Activated CD4-positive, alpha-beta memory T cell treated with anti-CD3 and anti-CD28 coated beads, Interleukin-2, amount 10 ng/mL, durations not matched to agents 7 days and 5 days (primary cell): ENCODE measurements at regions of chr1 and their contacts with region 1.

Region 1: GRCh38 chr1:206663832-206664652 is 20.7 kb upstream of the MAPKAPK2 start:
- DNase-seq: peak; percentile 69
- H3K4me3 Mint-ChIP-seq: no peak overlapping the region
- H3K27ac Mint-ChIP-seq: no peak overlapping the region
- H3K4me1 Mint-ChIP-seq: peaks cover 29% of the 10 kb centered on the region
- H3K27me3 Mint-ChIP-seq: peaks cover 27% of the 10 kb centered on the region

Region 2: GRCh38 chr1:206469933-206470691 is 193.9 kb before region 1 on chr1 and contains the start of gene IKBKE:
- CTCF ChIA-PET with region 1: interaction called, 14 read pairs
- POLR2A ChIA-PET with region 1: no interaction called
- DNase-seq: peak; percentile 72
- H3K4me3 Mint-ChIP-seq: peak within 1 kb of the TSS; percentile 93
- H3K27ac Mint-ChIP-seq: peak within 1 kb of the TSS; percentile 77
- H3K4me1 Mint-ChIP-seq: peaks cover 86% of the 10 kb centered on the region
- H3K27me3 Mint-ChIP-seq: no peaks in the 10 kb centered on the region
- total RNA-seq, gene IKBKE: 61.8 to 63.6 TPM

Region 3: GRCh38 chr1:206489980-206490770 is 173.9 kb before region 1 on chr1:
- CTCF ChIA-PET with region 1: interaction called, 43 read pairs
- POLR2A ChIA-PET with region 1: interaction called, 7 read pairs
- DNase-seq: peak; percentile 74
- H3K4me3 Mint-ChIP-seq: no peak overlapping the region
- H3K27ac Mint-ChIP-seq: peak overlapping the region; percentile 44
- H3K4me1 Mint-ChIP-seq: peaks cover 11% of the 10 kb centered on the region
- H3K27me3 Mint-ChIP-seq: no peaks in the 10 kb centered on the region

Region 4: GRCh38 chr1:206590025-206590758 is 73.8 kb before region 1 on chr1:
- CTCF ChIA-PET with region 1: interaction called, 21 read pairs
- POLR2A ChIA-PET with region 1: no interaction called
- DNase-seq: peak; percentile 80
- H3K4me3 Mint-ChIP-seq: peak overlapping the region; percentile 55
- H3K27ac Mint-ChIP-seq: peak overlapping the region; percentile 98
- H3K4me1 Mint-ChIP-seq: peaks cover 68% of the 10 kb centered on the region
- H3K27me3 Mint-ChIP-seq: no peaks in the 10 kb centered on the region

Region 5: DNA sequence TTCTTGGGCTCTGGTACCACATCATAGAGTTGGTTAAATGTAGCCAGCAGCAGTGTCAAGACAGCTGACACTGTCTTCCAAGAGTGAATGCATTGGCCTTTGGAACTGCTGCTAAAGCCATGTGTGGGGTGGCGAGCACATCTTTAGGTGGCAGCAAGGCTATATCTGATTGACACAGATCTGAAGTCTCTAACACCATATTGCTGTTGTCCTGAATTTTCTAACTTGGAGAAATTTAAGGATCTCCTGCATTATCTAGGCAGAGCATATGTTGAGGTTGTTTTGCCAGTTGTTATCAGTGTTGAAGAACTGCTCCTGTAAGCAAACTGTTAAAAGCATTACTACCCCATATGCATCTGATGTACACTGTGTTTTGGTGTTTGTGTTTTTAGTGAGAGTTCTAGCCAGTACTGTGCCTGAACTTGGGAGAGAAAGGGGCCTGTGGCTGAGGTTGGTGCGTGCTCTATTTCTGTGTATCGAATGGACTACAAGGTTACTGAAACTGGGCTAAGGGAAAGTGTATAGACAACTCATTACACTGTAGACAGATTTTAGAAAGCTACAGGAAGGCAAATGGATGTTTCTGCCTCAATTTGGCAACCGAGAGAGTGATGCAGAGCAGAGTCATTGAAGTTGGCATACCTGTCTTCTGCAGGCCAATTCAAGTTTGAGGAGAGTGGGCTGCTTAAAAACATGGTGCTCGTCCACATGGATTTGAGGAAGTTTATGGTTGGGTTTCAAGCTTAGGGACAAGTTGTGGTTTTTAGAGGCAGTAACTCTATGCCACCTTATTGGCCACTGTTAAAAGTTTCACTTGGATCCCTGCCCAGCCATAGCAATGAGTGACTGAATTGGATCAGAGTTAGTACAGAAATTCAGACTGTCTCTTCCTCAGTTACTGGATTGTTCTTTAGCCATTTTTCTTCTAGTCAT is 11.8 kb before region 1 on chr1:
- CTCF ChIA-PET with region 1: interaction called, 50 read pairs
- POLR2A ChIA-PET with region 1: no interaction called
- DNase-seq: no peak
- H3K4me3 Mint-ChIP-seq: no peak overlapping the region
- H3K27ac Mint-ChIP-seq: no peak overlapping the region
- H3K4me1 Mint-ChIP-seq: peaks cover 5% of the 10 kb centered on the region
- H3K27me3 Mint-ChIP-seq: peaks cover under 1% of the 10 kb centered on the region

Region 6: GRCh38 chr1:206808615-206809014 is 144.6 kb after region 1 on chr1:
- CTCF ChIA-PET with region 1: interaction called, 10 read pairs
- POLR2A ChIA-PET with region 1: no interaction called
- DNase-seq: peak; percentile 62
- H3K4me3 Mint-ChIP-seq: no peak overlapping the region
- H3K27ac Mint-ChIP-seq: no peak overlapping the region
- H3K4me1 Mint-ChIP-seq: peaks cover 53% of the 10 kb centered on the region
- H3K27me3 Mint-ChIP-seq: no peaks in the 10 kb centered on the region